IMR-90 (cell line): ENCODE measurements at regions of chr7 and their contacts with region 1.

Region 1: GRCh38 chr7:13117103-13117502 is 429.7 kb downstream of the ARL4A start:
- DNase-seq: peak; percentile 37
- ATAC-seq: peak; percentile 70
- H3K4me3 ChIP-seq: no peak overlapping the region
- H3K27ac ChIP-seq: no peak overlapping the region
- H3K4me1 ChIP-seq: peaks cover 3% of the 10 kb centered on the region
- H3K27me3 ChIP-seq: no peaks in the 10 kb centered on the region
- CTCF ChIP-seq: peak; percentile 68
- POLR2A ChIP-seq: no peak
- RAD21 ChIP-seq: peak; percentile 77

Region 2: DNA sequence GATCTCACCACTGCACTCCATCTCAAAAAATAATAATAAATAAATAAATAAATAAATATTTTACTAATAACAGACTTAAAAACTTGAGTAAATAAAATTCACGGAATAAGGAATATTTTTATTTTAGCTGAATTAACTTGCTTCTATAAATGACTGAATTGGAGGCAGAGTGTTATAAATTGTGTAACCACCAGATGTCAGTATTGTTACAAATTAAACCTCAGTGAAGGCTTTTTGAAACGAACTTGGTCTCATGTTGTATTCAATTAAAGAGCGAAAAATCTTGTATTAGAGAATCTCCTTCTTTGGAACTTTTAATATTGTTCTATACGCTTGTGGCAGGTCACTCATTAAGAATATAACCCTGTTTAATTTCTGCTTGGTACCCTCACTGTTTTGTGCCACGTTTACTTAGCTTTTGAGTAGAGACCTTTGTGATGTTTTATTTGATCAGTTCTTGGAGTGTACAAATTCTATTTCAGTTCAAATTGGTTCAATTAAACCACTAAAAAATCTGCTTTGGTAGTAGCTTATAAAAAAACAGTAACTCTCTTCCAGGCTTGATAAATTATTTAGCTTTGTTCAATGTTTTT is 592.2 kb before region 1 on chr7:
- CTCF ChIA-PET with region 1: no interaction called
- POLR2A ChIA-PET with region 1: no interaction called
- dilution Hi-C with region 1: no loop called
- in situ Hi-C with region 1: no loop called
- intact Hi-C with region 1: loop called (anchors 5 kb)
- DNase-seq: peak; percentile 69
- ATAC-seq: peak; percentile 67; the same call in 1 of the 2 replicates
- H3K4me3 ChIP-seq: no peak overlapping the region
- H3K27ac ChIP-seq: no peak overlapping the region
- H3K4me1 ChIP-seq: no peaks in the 10 kb centered on the region
- H3K27me3 ChIP-seq: peaks cover 1% of the 10 kb centered on the region; the same call in 1 of the 2 replicates
- CTCF ChIP-seq: peak; percentile 76
- POLR2A ChIP-seq: no peak
- RAD21 ChIP-seq: peak; percentile 66

Region 3: GRCh38 chr7:12638851-12639467 is 478.1 kb before region 1 on chr7:
- CTCF ChIA-PET with region 1: interaction called, 4 read pairs
- POLR2A ChIA-PET with region 1: no interaction called
- dilution Hi-C with region 1: no loop called
- in situ Hi-C with region 1: no loop called
- intact Hi-C with region 1: loop called (anchors 1 kb)
- DNase-seq: peak; percentile 54
- ATAC-seq: peak; percentile 69
- H3K4me3 ChIP-seq: no peak overlapping the region
- H3K27ac ChIP-seq: no peak overlapping the region
- H3K4me1 ChIP-seq: peaks cover 3% of the 10 kb centered on the region; the same call in 1 of the 2 replicates
- H3K27me3 ChIP-seq: no peaks in the 10 kb centered on the region; the same call in 1 of the 2 replicates
- CTCF ChIP-seq: peak; percentile 76
- POLR2A ChIP-seq: no peak
- RAD21 ChIP-seq: peak; percentile 77

Region 4: GRCh38 chr7:12888717-12889116 is 228.4 kb before region 1 on chr7:
- CTCF ChIA-PET with region 1: no interaction called
- POLR2A ChIA-PET with region 1: no interaction called
- dilution Hi-C with region 1: no loop called
- in situ Hi-C with region 1: no loop called
- intact Hi-C with region 1: loop called (anchors 10 kb)
- DNase-seq: peak; percentile 66
- ATAC-seq: peak; percentile 19; the same call in 1 of the 2 replicates
- H3K4me3 ChIP-seq: no peak overlapping the region
- H3K27ac ChIP-seq: no peak overlapping the region
- H3K4me1 ChIP-seq: peaks cover 6% of the 10 kb centered on the region; the same call in 1 of the 2 replicates
- H3K27me3 ChIP-seq: no peaks in the 10 kb centered on the region
- CTCF ChIP-seq: no peak
- POLR2A ChIP-seq: no peak
- RAD21 ChIP-seq: no peak

Region 5: GRCh38 chr7:12907774-12908173 is 209.3 kb before region 1 on chr7:
- CTCF ChIA-PET with region 1: no interaction called
- POLR2A ChIA-PET with region 1: no interaction called
- dilution Hi-C with region 1: no loop called
- in situ Hi-C with region 1: no loop called
- intact Hi-C with region 1: no loop called
- DNase-seq: no peak
- ATAC-seq: no peak
- H3K4me3 ChIP-seq: no peak overlapping the region
- H3K27ac ChIP-seq: no peak overlapping the region
- H3K4me1 ChIP-seq: peaks cover 2% of the 10 kb centered on the region; the same call in 1 of the 2 replicates
- H3K27me3 ChIP-seq: no peaks in the 10 kb centered on the region
- CTCF ChIP-seq: no peak
- POLR2A ChIP-seq: no peak
- RAD21 ChIP-seq: no peak

Region 6: DNA sequence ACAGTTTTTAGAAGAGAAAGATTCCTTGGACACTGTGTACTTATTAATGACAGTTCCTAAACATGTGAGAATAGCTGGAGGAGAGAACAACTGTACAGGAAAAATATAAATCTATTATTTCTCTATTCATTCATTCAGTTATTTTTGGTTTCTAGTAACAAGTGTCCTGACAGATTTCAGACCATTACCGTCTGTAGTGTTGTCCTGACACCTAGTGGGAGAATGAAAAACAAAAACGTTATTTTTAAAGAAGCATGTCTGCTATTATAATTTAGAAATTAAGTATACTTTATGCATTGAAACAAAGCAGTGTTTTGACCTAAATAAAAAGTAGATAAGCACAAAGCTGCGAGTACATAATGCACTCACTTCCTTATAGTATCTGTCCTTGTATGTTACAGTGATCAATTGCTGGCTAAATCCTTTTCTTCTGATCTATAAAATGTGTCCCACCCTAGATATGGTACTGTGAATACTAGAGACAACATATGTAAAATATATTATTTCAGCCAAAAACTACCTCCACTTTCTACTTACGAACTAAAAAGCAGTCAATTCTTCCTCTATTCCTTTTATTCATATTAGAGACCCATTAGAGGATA is 145.9 kb after region 1 on chr7:
- CTCF ChIA-PET with region 1: interaction called, 4 read pairs
- POLR2A ChIA-PET with region 1: no interaction called
- dilution Hi-C with region 1: no loop called
- in situ Hi-C with region 1: no loop called
- intact Hi-C with region 1: loop called (anchors 2 kb)
- DNase-seq: peak; percentile 52
- ATAC-seq: peak; percentile 63; the same call in 1 of the 2 replicates
- H3K4me3 ChIP-seq: no peak overlapping the region
- H3K27ac ChIP-seq: no peak overlapping the region
- H3K4me1 ChIP-seq: no peaks in the 10 kb centered on the region
- H3K27me3 ChIP-seq: no peaks in the 10 kb centered on the region
- CTCF ChIP-seq: peak; percentile 87
- POLR2A ChIP-seq: no peak
- RAD21 ChIP-seq: peak; percentile 90